HCT116 (cell line): ENCODE measurements at regions of chr9 and their contacts with region 1.

Region 1: DNA sequence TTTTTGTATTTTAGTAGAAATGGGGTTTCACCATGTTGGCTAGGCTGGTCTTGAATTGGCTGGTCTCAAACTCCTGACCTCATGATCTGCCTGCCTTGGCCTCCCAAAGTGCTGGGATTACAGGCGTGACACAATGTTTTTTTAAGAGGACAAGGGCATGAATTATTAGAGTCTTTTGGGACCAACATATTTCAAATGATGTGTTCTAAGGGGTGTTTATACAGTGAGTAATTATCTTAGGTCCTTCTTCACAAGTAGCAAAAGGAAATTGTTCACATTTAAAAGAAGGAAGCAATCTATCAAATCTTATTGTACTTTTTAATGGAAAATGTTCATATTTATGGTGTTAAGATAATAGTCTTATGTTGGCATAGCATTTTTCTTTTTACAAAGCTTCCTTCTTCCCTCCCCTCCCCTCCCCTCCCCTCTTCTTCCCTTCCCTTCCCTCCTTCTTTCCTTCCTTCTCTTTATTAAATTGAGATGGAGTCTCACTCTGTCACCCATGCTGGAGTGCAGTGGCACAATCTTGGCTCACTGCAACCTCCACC is 6.7 kb downstream of the GNG10 start:
- DNase-seq: no peak
- ATAC-seq: no peak
- H3K4me3 ChIP-seq: no peak overlapping the region
- H3K27ac ChIP-seq: no peak overlapping the region
- H3K4me1 ChIP-seq: peaks cover 4% of the 10 kb centered on the region in 2 experiments; a peak in 3 of 4 replicates
- H3K27me3 ChIP-seq: no peaks in the 10 kb centered on the region
- CTCF ChIP-seq: no peak
- POLR2A ChIP-seq: no peak
- RAD21 ChIP-seq: no peak

Region 2: DNA sequence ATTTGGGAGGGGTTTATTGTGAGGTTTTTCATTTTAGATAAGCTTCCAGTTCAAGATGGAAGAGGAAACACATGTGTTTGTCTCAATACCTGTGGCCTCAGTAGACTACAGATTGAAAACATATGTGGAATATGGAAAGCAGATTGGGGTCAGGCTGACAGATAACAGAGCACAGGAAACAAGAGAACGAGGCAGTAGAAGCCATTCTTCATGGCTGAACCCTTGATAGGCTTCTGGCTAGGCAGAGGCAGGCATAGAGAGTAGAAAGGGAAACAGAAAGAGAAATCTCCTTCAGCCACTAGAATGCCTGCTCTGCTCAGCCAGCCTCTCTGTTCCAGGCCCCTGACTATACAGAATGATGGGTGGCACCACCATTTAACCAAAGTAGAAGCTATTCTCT is 847.0 kb before region 1 on chr9:
- CTCF ChIA-PET with region 1: no interaction called
- POLR2A ChIA-PET with region 1: no interaction called
- RAD21 ChIA-PET with region 1: no interaction called
- intact Hi-C with region 1: no loop called
- DNase-seq: no peak
- ATAC-seq: no peak
- H3K4me3 ChIP-seq: no peak overlapping the region
- H3K27ac ChIP-seq: no peak overlapping the region
- H3K4me1 ChIP-seq: no peaks in the 10 kb centered on the region
- H3K27me3 ChIP-seq: no peaks in the 10 kb centered on the region
- CTCF ChIP-seq: no peak
- POLR2A ChIP-seq: no peak
- RAD21 ChIP-seq: no peak

Region 3: DNA sequence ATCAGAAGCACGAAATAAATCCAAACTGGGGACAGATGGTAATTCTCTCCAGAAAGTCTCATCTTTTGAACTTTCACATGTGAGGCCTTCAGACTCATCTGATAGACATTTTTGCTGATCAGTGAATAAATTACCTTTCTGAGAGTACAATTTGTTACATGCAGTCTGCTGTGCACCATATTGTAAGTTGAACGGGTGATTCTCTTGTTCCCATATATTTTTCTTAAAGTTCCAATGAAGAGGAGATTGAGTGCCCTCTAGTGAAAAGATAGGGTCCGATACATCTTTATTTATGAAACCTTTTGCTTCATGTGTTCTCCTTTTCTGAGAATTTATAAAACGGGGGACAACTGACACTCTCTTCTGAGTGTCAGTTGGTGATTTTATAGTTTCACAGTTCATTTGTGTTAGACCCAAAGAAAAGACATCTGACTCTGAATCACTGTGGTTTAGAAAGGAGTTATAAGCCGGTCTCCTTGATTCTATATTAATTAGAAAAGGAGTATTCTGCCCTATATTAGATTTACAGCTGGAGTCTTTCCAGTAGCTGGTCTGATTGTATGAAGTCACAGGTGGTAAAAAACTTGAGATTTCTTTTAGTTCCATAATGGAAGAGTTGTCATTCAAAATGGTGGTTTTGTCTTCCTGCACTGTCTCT is 23.7 kb after region 1 on chr9:
- CTCF ChIA-PET with region 1: interaction called, 3 read pairs
- POLR2A ChIA-PET with region 1: no interaction called
- RAD21 ChIA-PET with region 1: no interaction called
- intact Hi-C with region 1: loop called (anchors 2 kb)
- DNase-seq: peak; percentile 24
- ATAC-seq: peak; percentile 74
- H3K4me3 ChIP-seq: no peak overlapping the region
- H3K27ac ChIP-seq: no peak overlapping the region
- H3K4me1 ChIP-seq: peaks cover 0 to 4% of the 10 kb centered on the region in 2 experiments; a peak in 1 of 4 replicates
- H3K27me3 ChIP-seq: no peaks in the 10 kb centered on the region
- CTCF ChIP-seq: peak; percentile 39 to 57 (median 54); a peak in 5 of 6 replicates
- POLR2A ChIP-seq: no peak
- RAD21 ChIP-seq: peak; percentile 68